ENCODE measurements at regions of chr6 and their contacts with region 1.

Region 1: GRCh38 chr6:25971187-25971811 is 8.7 kb downstream of the TRIM38 start:
- DNase-seq: peak; percentile 83
- H3K4me3 Mint-ChIP-seq: peak overlapping the region; percentile 24
- H3K27ac Mint-ChIP-seq: peak overlapping the region; percentile 77
- H3K4me1 Mint-ChIP-seq: peaks cover 38% of the 10 kb centered on the region
- H3K27me3 Mint-ChIP-seq: no peaks in the 10 kb centered on the region
- CTCF ChIP-seq: no peak

Region 2: GRCh38 chr6:25981568-25982263 is 10.4 kb after region 1 on chr6:
- CTCF ChIA-PET with region 1: no interaction called
- POLR2A ChIA-PET with region 1: interaction called, 18 read pairs
- intact Hi-C with region 1: no loop called
- DNase-seq: no peak
- H3K4me3 Mint-ChIP-seq: no peak overlapping the region
- H3K27ac Mint-ChIP-seq: no peak overlapping the region
- H3K4me1 Mint-ChIP-seq: no peaks in the 10 kb centered on the region
- H3K27me3 Mint-ChIP-seq: no peaks in the 10 kb centered on the region
- CTCF ChIP-seq: no peak

Region 3: GRCh38 chr6:26087284-26088115 is 116.2 kb after region 1 on chr6 and contains the start of gene HFE:
- CTCF ChIA-PET with region 1: no interaction called
- POLR2A ChIA-PET with region 1: no interaction called
- intact Hi-C with region 1: no loop called
- DNase-seq: peak; percentile 53
- H3K4me3 Mint-ChIP-seq: peak within 1 kb of the TSS; percentile 88
- H3K27ac Mint-ChIP-seq: peak within 1 kb of the TSS; percentile 92
- H3K4me1 Mint-ChIP-seq: peaks cover 10% of the 10 kb centered on the region
- H3K27me3 Mint-ChIP-seq: no peaks in the 10 kb centered on the region
- CTCF ChIP-seq: no peak
- total RNA-seq, gene HFE: 2.8 and 5.2 TPM in 2 replicates